Tibial artery (tissue), 4 donors: ENCODE measurements at regions of chr16 and their contacts with region 1.

Region 1: GRCh38 chr16:4709481-4709880 is 16.1 kb downstream of the NUDT16L1 start:
- DNase-seq: no peak
- H3K4me3 ChIP-seq: no peak overlapping the region
- H3K27ac ChIP-seq: no peak overlapping the region
- H3K4me1 ChIP-seq: no peaks in the 10 kb centered on the region
- H3K27me3 ChIP-seq: no peaks in the 10 kb centered on the region
- CTCF ChIP-seq: no peak

Region 2: DNA sequence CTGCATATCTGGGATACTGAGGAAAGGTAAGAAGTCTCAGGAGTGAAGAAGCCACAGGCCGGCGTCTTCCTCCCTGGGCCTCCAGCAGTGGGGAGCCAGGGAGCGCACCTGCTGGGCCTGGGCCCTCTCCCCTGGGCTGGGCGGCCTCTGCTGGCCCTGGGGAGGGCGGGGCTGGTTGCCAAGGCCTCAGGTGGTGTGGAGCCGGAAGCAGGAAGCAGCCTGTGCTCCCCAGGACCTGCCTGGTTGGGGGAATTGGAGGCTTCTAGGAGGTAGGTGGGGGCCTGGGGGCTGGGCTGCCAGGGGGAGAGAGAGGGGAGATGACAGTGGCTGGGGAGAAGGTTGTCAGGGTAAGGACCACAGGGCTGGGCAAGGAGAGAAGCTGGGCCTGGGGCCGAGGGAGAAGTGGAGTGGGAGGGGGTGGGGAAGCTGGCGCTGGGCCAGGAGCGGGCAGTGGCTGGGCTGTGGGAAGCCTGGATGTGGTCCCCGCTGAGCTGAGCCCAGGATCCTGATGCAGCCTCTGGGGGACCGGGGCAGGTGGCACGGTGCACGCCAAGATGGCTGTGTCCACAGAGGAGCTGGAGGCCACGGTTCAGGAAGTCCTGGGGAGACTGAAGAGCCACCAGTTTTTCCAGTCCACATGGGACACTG is 85.8 kb after region 1 on chr16 and contains the start of gene SMIM22:
- intact Hi-C with region 1: loop called (anchors 5 kb)
- DNase-seq: no peak
- H3K4me3 ChIP-seq: no peak within 1 kb of the TSS
- H3K27ac ChIP-seq: no peak within 1 kb of the TSS
- H3K4me1 ChIP-seq: peaks cover 0 to 4% (median 0%) of the 10 kb centered on the region in 4 donors
- H3K27me3 ChIP-seq: no peaks in the 10 kb centered on the region
- CTCF ChIP-seq: no peak